ENCODE measurements at regions of chr11 and their contacts with region 1.

Region 1: GRCh38 chr11:124644426-124645280 is 22.0 kb downstream of the TBRG1 start:
- DNase-seq: peak; percentile 66 to 81 (median 68)
- ATAC-seq: peak; percentile 75
- H3K4me3 ChIP-seq: no peak overlapping the region
- H3K27ac ChIP-seq: peak overlapping the region; percentile 81
- H3K4me1 ChIP-seq: peaks cover 0 to 27% of the 10 kb centered on the region in 2 experiments; a peak in 4 of 5 replicates
- H3K27me3 ChIP-seq: no peaks in the 10 kb centered on the region
- CTCF ChIP-seq: peak; percentile 90 to 92 (median 90)
- EP300 ChIP-seq: no peak; the same call in 1 of the 2 replicates
- POLR2A ChIP-seq: no peak
- RAD21 ChIP-seq: peak; percentile 86 to 88

Region 2: DNA sequence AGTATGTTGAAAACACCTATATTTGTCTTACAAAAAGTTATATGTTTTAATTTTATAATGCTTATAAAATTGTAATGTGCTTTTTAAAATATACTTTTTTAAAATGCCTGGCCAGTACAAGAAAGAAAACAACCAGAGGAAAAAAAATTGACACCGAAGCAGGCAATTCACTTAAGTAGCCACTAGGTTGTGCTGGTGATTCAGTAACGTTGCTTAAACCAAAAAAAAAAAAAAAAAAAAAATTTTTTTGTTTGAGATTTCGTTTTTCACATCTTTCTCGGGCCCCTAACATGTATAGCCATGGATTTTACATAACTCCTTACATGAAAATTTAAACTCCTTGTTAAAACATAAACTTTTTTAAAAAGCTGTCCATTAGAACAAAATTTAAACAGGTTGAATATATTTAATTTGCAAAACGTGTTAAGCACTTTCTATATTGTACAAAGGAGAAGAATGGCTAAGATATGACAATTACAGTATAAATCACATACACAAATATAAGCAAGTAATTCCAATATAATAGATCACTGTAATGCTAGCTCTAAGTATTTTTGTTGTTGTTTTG is 229.2 kb before region 1 on chr11:
- CTCF ChIA-PET with region 1: interaction called, 5 read pairs
- POLR2A ChIA-PET with region 1: no interaction called
- in situ Hi-C with region 1: no loop called
- intact Hi-C with region 1: loop called (anchors 5 kb)
- DNase-seq: peak; percentile 29 to 49 (median 41)
- ATAC-seq: no peak
- H3K4me3 ChIP-seq: no peak overlapping the region
- H3K27ac ChIP-seq: no peak overlapping the region
- H3K4me1 ChIP-seq: no peaks in the 10 kb centered on the region
- H3K27me3 ChIP-seq: no peaks in the 10 kb centered on the region
- CTCF ChIP-seq: peak; percentile 48 to 80 (median 53); a peak in 5 of 6 replicates
- EP300 ChIP-seq: no peak
- POLR2A ChIP-seq: no peak
- RAD21 ChIP-seq: peak; percentile 60 to 83

Region 3: DNA sequence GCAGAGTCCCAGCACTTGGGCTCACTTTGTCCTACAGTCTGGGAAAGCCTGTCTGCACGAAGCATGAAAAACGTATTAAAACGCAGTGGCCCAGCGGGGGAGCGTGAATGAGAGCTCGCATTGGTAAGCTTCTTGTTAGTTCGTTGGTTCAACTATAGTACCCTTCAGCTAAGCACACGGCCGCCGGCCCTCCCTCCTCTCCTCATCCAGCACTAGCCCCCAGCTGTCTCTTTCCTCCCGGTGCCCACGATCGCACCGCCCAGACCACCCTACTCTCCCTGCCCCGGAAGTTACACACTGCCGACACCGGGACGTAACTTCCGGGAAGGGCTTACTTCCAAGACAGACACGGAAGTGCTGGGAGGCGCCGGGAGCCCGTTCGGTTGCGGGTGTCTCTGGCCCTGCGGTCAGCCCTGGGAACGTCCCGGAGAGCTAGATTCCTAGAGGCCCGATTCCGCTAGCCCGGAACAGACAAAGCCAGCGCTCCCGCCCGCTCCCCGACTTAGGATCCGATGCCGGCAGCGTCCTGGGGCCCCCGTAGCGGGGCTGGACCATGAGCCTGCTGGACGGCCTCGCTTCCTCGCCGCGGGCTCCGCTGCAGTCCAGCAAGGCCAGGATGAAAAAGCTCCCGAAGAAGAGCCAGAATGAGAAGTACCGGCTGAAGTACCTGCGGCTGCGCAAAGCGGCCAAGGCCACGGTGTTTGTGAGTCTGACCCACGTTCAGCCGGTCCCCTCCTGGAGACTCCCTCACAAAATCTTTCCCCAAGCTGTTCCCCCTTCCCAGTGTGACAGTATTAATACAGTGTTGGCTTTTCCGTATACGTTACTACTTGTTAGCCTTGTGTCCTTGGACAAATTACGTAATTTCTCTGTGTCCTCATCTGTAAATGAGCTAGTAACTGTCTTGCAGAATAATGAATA is 21.9 kb before region 1 on chr11 and contains the start of gene TBRG1:
- CTCF ChIA-PET with region 1: no interaction called
- POLR2A ChIA-PET with region 1: interaction called, 11 read pairs
- in situ Hi-C with region 1: no loop called
- intact Hi-C with region 1: loop called (anchors 1 kb)
- DNase-seq: peak; percentile 83 to 94 (median 88)
- ATAC-seq: peak; percentile 98
- H3K4me3 ChIP-seq: peak within 1 kb of the TSS; percentile 75
- H3K27ac ChIP-seq: peak within 1 kb of the TSS; percentile 77
- H3K4me1 ChIP-seq: peaks cover 0 to 13% of the 10 kb centered on the region in 2 experiments; a peak in 4 of 5 replicates
- H3K27me3 ChIP-seq: peaks cover 0 to 6% of the 10 kb centered on the region in 2 experiments; a peak in 3 of 5 replicates
- CTCF ChIP-seq: no peak
- EP300 ChIP-seq: no peak; the same call in 1 of the 2 replicates
- POLR2A ChIP-seq: peak; percentile 96
- RAD21 ChIP-seq: no peak; a peak in 1 of 4 replicates
- polyA plus RNA-seq, gene TBRG1: 8.7 to 11.5 TPM

Region 4: DNA sequence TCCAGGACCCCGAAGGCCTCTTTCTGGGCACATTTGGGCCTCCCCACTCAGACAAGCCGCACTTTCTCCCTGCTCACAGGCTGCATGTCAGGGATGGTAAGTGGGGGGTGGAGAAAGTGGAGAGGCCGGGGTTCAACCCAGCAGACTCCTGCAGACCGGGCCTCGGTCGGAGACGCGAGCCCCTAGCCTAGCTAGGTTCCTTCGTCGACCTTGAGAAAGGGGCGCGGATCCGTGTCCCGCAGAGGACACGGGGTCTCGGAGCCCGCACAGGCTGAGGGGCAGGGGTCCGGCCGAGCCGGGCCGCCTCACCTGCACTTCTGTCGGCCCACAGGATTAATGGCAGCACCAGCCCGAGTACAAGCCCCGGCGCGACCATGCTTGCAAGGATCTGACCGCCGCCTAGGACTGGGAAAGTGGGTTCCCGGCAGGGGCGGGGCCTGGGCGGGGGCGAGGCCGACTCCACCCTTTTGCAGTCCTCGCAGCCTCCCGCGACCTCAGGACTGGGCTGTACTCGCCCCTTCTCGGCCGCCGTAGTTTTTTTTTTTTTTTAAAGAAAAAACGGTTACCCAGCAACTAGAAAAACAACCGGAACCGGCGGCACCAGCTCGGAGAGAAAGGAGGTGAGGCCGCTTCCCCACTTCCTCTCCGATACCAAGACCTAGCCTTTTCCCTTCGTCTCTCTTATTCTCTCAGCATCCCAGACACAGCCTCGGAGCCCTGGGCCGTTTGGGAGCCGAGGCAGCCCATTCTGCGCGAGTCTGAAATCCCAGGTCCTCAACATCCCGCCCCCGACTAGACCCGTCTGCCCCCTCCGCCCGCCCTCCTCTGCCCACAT is 28.9 kb after region 1 on chr11 and contains the starts of genes SIAE and SPA17:
- CTCF ChIA-PET with region 1: no interaction called
- POLR2A ChIA-PET with region 1: interaction called, 4 read pairs
- in situ Hi-C with region 1: no loop called
- intact Hi-C with region 1: loop called (anchors 1 kb)
- DNase-seq: peak; percentile 95 to 98 (median 97)
- ATAC-seq: peak; percentile 99
- H3K4me3 ChIP-seq: peak within 1 kb of the TSS; percentile 83
- H3K27ac ChIP-seq: peak within 1 kb of the TSS; percentile 76
- H3K4me1 ChIP-seq: peaks cover 4 to 14% of the 10 kb centered on the region in 2 experiments
- H3K27me3 ChIP-seq: no peaks in the 10 kb centered on the region
- CTCF ChIP-seq: no peak
- EP300 ChIP-seq: peak; percentile 41; the same call in 1 of the 2 replicates
- POLR2A ChIP-seq: peak; percentile 86
- RAD21 ChIP-seq: no peak
- polyA plus RNA-seq, gene SIAE: 0.89 to 1.2 TPM
- polyA plus RNA-seq, gene SPA17: 9.0 to 9.9 TPM

Region 5: DNA sequence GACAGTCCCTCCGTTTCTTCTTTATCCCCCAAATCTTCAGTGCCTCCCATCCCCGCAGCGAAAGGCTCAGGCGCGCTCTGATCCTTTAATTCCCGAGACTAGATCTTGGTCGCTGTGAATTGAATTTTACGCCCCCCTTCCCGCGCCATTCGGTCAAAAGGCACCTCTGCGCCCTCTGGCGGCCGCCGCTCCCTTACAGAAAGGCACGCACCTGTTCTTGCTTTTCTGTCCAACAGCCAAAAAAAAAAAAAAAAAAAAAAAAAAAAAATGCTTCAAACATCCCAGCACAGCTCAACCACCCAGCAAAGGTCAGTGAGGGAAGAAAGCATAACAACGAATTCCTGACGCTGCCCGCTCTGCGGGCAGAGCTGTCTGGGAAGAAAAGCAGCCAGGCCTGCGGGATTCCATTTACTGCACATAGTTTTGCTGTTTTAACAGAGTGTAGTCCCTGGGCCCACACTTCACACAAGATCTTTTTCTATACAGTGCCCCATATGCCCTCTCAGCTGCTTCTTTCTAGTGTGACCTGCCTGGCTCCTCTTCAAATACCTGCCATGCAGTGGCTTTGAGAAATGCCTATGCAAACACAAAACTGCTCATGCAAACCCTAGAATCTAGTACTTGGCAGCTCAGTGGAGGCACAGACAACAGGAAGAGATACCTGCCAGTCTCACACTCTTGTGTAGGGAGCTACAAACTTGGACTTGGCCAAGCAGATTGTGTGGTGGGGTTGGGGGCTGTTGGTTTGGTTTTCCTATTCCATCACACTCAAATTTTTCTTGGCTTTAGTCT is 118.7 kb after region 1 on chr11:
- CTCF ChIA-PET with region 1: interaction called, 22 read pairs
- POLR2A ChIA-PET with region 1: no interaction called
- in situ Hi-C with region 1: no loop called
- intact Hi-C with region 1: loop called (anchors 1 kb)
- DNase-seq: peak; percentile 62 to 87 (median 66)
- ATAC-seq: peak; percentile 75
- H3K4me3 ChIP-seq: peak overlapping the region; percentile 46
- H3K27ac ChIP-seq: no peak overlapping the region
- H3K4me1 ChIP-seq: peaks cover 0 to 34% of the 10 kb centered on the region in 2 experiments; a peak in 4 of 5 replicates
- H3K27me3 ChIP-seq: peaks cover 0 to 22% of the 10 kb centered on the region in 2 experiments; a peak in 2 of 5 replicates
- CTCF ChIP-seq: peak; percentile 82 to 84 (median 84)
- EP300 ChIP-seq: no peak
- POLR2A ChIP-seq: no peak
- RAD21 ChIP-seq: peak; percentile 55 to 70

Region 6: GRCh38 chr11:124793466-124794278 is 149.0 kb after region 1 on chr11:
- CTCF ChIA-PET with region 1: interaction called, 6 read pairs
- POLR2A ChIA-PET with region 1: interaction called, 4 read pairs
- in situ Hi-C with region 1: no loop called
- intact Hi-C with region 1: loop called (anchors 2 kb)
- DNase-seq: peak; percentile 31 to 76 (median 48)
- ATAC-seq: peak; percentile 93
- H3K4me3 ChIP-seq: no peak overlapping the region
- H3K27ac ChIP-seq: no peak overlapping the region
- H3K4me1 ChIP-seq: 0 out of 5 replicates have a peak, but pooled peaks cover 0 to 3% of the 10 kb centered on the region in 2 experiments
- H3K27me3 ChIP-seq: no peaks in the 10 kb centered on the region
- CTCF ChIP-seq: peak; percentile 59 to 86 (median 72); a peak in 5 of 6 replicates
- EP300 ChIP-seq: no peak; the same call in 1 of the 2 replicates
- POLR2A ChIP-seq: no peak
- RAD21 ChIP-seq: peak; percentile 67 to 74

Measured in K562 (cell line).